ENCODE measurements at regions of chr2 and their contacts with region 1.

Region 1: GRCh38 chr2:42663106-42663780 is 94.8 kb downstream of the MTA3 start:
- DNase-seq: peak; percentile 62
- H3K4me3 Mint-ChIP-seq: no peak overlapping the region
- H3K27ac Mint-ChIP-seq: no peak overlapping the region
- H3K4me1 Mint-ChIP-seq: no peaks in the 10 kb centered on the region
- H3K27me3 Mint-ChIP-seq: no peaks in the 10 kb centered on the region
- CTCF ChIP-seq: peak; percentile 88

Region 2: DNA sequence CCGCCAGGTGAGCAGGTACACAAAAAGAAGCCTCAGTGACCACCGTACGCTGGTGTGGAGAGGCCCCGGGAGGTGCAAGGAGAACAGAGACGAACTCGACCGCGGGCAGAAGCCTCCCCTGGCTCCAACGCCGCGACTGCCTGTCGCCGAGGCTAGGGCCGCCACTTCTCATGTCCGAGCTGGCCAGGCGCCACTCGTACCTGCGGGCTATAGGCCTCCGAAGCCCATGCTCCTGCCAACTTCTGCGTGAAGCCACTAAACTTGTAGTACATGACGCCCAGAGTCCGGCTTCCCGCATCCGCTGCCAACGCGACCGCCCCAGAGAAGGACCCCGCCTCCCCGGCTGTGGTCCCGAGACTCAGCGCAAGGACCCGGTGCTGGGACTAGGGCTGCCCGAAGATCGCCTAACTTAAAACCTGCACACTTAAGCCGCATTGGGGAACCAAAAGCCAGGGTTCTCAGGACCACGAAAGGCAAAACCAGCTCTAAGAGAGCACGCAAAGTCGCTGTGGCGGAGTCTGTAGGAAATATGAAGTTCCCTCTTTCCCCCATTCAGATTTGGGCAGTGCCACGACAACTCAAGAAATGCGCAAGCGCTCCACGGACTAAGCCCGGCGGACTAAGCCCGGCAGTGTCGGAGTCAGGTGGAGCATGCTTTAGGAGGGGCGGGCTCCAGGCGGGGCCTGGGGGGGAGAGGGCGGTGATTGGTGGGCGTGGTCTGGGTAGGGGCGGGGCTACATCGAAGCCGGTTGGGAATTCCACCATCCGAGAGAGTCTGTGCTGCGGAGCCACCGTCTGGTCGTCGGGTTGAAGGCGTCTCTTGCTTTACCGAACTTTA is 302.1 kb before region 1 on chr2 and contains the start of gene COX7A2L:
- CTCF ChIA-PET with region 1: no interaction called
- intact Hi-C with region 1: loop called (anchors 10 kb)
- DNase-seq: peak; percentile 97
- H3K4me3 Mint-ChIP-seq: peak within 1 kb of the TSS; percentile 83
- H3K27ac Mint-ChIP-seq: peak within 1 kb of the TSS; percentile 71
- H3K4me1 Mint-ChIP-seq: peaks cover 26% of the 10 kb centered on the region
- H3K27me3 Mint-ChIP-seq: no peaks in the 10 kb centered on the region
- CTCF ChIP-seq: no peak
- total RNA-seq, gene COX7A2L: 97.5 and 98.0 TPM in 2 replicates

Region 3: GRCh38 chr2:42513257-42513918 is 149.9 kb before region 1 on chr2:
- CTCF ChIA-PET with region 1: interaction called, 5 read pairs
- intact Hi-C with region 1: loop called (anchors 1 kb)
- DNase-seq: peak; percentile 61
- H3K4me3 Mint-ChIP-seq: no peak overlapping the region
- H3K27ac Mint-ChIP-seq: no peak overlapping the region
- H3K4me1 Mint-ChIP-seq: peaks cover 8% of the 10 kb centered on the region
- H3K27me3 Mint-ChIP-seq: no peaks in the 10 kb centered on the region
- CTCF ChIP-seq: peak; percentile 13

Region 4: GRCh38 chr2:42754021-42754775 is 91.0 kb after region 1 on chr2:
- CTCF ChIA-PET with region 1: no interaction called
- intact Hi-C with region 1: no loop called
- DNase-seq: no peak
- H3K4me3 Mint-ChIP-seq: no peak overlapping the region
- H3K27ac Mint-ChIP-seq: no peak overlapping the region
- H3K4me1 Mint-ChIP-seq: no peaks in the 10 kb centered on the region
- H3K27me3 Mint-ChIP-seq: no peaks in the 10 kb centered on the region
- CTCF ChIP-seq: no peak

Region 5: DNA sequence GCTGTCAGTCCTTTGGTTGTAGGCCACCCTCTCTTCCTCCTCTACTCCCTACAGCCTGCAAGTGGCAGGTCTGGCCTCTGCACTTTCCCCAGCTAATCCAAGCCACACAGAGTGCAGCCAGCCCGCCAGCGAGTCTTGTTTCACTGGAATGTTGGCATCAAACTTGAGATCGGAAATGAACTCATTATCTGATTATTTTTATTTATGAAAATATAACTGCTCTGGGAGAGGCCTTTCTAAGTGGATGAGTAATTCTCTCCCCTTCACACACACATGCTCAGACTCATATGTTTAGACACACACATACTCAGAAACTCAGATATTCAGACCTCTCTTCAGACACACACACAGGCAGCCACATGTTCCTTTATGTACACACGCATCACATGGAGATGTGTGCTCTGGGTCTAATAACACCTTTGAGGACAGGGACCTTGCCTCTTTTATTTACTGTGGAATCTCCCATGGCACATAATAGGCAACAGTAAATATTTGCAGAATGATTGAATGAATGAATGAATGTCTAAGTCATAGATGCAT is 411.9 kb after region 1 on chr2:
- CTCF ChIA-PET with region 1: no interaction called
- intact Hi-C with region 1: no loop called
- DNase-seq: peak; percentile 72
- H3K4me3 Mint-ChIP-seq: no peak overlapping the region
- H3K27ac Mint-ChIP-seq: peak overlapping the region; percentile 95
- H3K4me1 Mint-ChIP-seq: peaks cover 50% of the 10 kb centered on the region
- H3K27me3 Mint-ChIP-seq: no peaks in the 10 kb centered on the region
- CTCF ChIP-seq: no peak